ENCODE measurements at regions of chr7 and their contacts with region 1.

Region 1: DNA sequence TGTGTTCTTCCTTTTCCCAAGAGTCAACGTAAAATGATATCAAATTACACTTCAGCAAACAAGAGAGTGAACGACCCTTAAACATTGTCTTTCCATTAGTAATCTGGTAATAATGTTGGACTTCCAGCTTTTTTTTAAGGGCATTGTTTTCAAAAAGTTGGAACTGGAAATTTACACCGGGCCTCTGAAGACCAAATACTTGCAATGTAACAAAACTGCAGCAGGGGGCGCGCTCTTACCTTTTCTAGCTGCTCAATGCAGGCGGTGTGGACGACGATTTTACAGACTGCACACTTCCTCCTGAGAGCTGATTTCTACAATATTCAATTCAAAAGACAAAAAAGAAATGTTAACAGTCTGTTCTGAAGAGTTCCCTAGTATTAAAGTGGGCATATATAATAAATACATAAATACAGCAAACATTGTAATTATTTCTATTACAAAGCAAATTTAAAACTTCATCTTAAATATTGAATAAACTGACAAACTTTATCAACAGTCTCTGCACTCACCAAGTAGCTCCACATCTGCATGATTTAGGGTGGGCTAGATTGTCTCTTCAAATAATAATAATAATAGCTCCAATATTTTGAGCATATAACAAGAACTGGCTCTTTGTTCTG is 190.4 kb downstream of the DGKI start:
- DNase-seq: peak; percentile 76
- ATAC-seq: peak; percentile 90
- H3K4me3 ChIP-seq: no peak overlapping the region
- H3K27ac ChIP-seq: no peak overlapping the region
- H3K4me1 ChIP-seq: peaks cover 9% of the 10 kb centered on the region
- H3K27me3 ChIP-seq: no peaks in the 10 kb centered on the region
- CTCF ChIP-seq: peak; percentile 80

Region 2: GRCh38 chr7:137386966-137387365 is 269.4 kb before region 1 on chr7:
- intact Hi-C with region 1: no loop called
- DNase-seq: no peak
- ATAC-seq: no peak
- H3K4me3 ChIP-seq: no peak overlapping the region
- H3K27ac ChIP-seq: no peak overlapping the region
- H3K4me1 ChIP-seq: no peaks in the 10 kb centered on the region
- H3K27me3 ChIP-seq: no peaks in the 10 kb centered on the region
- CTCF ChIP-seq: no peak

Region 3: DNA sequence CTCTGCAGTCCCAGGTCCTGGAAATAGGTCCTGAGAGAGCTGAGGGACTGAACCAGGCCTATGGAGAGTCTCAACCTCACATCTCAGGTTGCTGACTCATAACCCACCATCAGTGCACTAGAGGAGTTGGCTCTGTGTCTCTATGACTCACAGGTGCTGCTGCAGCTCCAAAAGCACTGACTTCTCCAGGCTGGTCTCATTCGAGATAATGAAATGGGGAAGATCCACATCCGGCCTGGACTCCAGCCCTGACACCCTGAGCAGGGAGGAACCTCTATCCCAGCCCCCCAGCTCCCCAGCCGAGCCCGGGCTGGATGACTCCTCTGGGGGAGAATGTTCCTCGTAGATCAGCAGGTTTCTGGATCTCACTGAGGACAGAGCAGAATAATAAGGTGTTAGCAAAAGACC is 225.9 kb after region 1 on chr7:
- intact Hi-C with region 1: loop called (anchors 10 kb)
- DNase-seq: no peak
- ATAC-seq: no peak
- H3K4me3 ChIP-seq: no peak overlapping the region
- H3K27ac ChIP-seq: no peak overlapping the region
- H3K4me1 ChIP-seq: no peaks in the 10 kb centered on the region
- H3K27me3 ChIP-seq: no peaks in the 10 kb centered on the region
- CTCF ChIP-seq: no peak

Measured in upper lobe of right lung (tissue), 1 donor.